Heart left ventricle (tissue), 16 donors: ENCODE measurements at regions of chr18 and their contacts with region 1.

Region 1: GRCh38 chr18:6132751-6133368 is 237.5 kb upstream of the TMEM200C start:
- DNase-seq: peak in 4 of 5 donors; percentile 33 to 65 (median 44)
- ATAC-seq: peak; percentile 94 to 98 (median 96)
- H3K4me3 ChIP-seq: no peak overlapping the region
- H3K27ac ChIP-seq: peak overlapping the region in 2 of 12 donors; percentile 60 to 63
- H3K4me1 ChIP-seq: peaks cover 0 to 16% (median 0%) of the 10 kb centered on the region in 12 donors
- H3K27me3 ChIP-seq: no peaks in the 10 kb centered on the region
- CTCF ChIP-seq: no peak
- POLR2A ChIP-seq: no peak

Region 2: DNA sequence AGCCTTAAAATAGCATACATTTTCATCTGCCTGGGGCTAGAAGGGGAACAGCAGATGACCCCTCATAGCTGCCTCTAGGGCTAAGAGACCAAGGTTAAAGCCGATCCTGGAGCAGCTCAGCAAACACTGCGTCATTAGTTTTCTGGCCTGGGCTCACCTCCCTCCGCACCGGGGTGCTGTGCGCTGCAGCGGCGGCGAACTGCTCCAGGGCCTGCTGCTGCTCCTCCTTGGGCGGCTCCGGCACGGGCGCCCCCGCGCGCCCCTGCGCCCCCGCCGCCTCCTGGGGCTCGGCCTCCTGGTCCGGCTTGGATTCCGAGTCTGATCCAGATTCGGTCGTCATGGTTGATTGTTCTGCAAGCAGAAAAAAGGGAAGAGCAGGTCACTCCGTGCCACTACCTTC is 644.0 kb before region 1 on chr18:
- intact Hi-C with region 1: no loop called
- DNase-seq: peak in 1 of 5 donors; percentile 63
- ATAC-seq: peak in 3 of 4 donors; percentile 42 to 66 (median 50)
- H3K4me3 ChIP-seq: peak overlapping the region in 2 of 12 donors; percentile 1 to 5
- H3K27ac ChIP-seq: peak overlapping the region in 1 of 12 donors; percentile 56
- H3K4me1 ChIP-seq: no peaks in the 10 kb centered on the region
- H3K27me3 ChIP-seq: no peaks in the 10 kb centered on the region
- CTCF ChIP-seq: no peak
- POLR2A ChIP-seq: no peak

Region 3: DNA sequence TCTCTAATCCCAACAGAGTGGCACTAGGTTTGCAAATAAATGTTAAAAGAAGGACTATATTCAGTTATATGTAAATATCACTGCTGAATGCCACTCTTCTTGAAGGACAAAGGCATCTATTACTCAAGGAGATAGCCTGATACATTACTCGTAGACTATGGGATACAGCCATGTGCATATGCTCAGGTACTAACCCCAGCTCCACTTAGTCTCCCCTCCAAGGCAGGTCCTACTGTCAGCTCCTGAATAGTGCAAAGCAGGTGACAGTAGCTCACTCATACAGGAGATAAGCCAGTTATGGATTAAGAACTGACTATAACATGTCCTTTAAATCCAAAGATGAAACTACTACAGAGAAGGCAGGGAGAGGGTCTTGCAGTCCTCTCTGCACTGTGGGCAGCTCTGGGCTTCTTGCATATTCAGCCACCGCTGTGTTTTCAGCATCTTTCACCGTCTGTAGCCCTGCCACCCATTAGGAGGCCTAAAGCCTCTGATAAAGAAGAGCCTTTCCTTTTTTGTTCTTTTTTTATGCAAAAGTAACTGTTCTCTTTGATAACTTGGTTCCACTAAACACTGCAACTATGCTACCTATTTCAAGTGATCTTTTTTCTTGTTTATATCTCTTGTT is 454.0 kb before region 1 on chr18:
- intact Hi-C with region 1: no loop called
- DNase-seq: no peak
- ATAC-seq: no peak
- H3K4me3 ChIP-seq: no peak overlapping the region
- H3K27ac ChIP-seq: no peak overlapping the region
- H3K4me1 ChIP-seq: no peaks in the 10 kb centered on the region
- H3K27me3 ChIP-seq: peaks cover 0 to 4% (median 0%) of the 10 kb centered on the region in 9 donors
- CTCF ChIP-seq: no peak
- POLR2A ChIP-seq: no peak

Region 4: GRCh38 chr18:5868218-5869115 is 264.4 kb before region 1 on chr18:
- intact Hi-C with region 1: no loop called
- DNase-seq: peak in 4 of 5 donors; percentile 55 to 65 (median 58)
- ATAC-seq: peak; percentile 61 to 93 (median 88)
- H3K4me3 ChIP-seq: no peak overlapping the region
- H3K27ac ChIP-seq: no peak overlapping the region
- H3K4me1 ChIP-seq: no peaks in the 10 kb centered on the region
- H3K27me3 ChIP-seq: peaks cover 0 to 20% (median 0%) of the 10 kb centered on the region in 9 donors
- CTCF ChIP-seq: peak; percentile 58 to 82 (median 76)
- POLR2A ChIP-seq: no peak

Region 5: DNA sequence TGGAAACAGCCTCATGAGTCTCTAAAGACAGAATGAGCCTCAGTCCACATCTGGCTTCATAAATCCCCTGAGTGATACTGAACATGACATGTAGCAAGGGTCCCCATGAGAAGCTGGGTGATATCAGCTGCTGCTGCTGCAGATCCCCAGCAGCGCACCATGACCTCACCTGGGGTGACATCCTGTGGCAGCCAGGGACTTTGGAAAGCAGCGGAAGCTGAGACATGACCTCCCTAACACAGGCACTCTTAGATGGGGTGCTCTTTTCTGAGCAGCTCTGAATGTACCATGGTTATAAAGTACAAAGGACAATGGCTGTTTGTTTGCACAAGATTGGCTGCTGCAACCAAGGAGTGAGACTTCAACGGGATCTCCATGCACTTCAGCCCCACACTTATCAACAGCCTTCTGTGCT is 162.9 kb before region 1 on chr18:
- intact Hi-C with region 1: loop called in 1 of 10 experiments (anchors 10 kb)
- DNase-seq: no peak
- ATAC-seq: no peak
- H3K4me3 ChIP-seq: no peak overlapping the region
- H3K27ac ChIP-seq: no peak overlapping the region
- H3K4me1 ChIP-seq: peaks cover 0 to 6% (median 0%) of the 10 kb centered on the region in 12 donors
- H3K27me3 ChIP-seq: peaks cover 0 to 2% (median 0%) of the 10 kb centered on the region in 9 donors
- CTCF ChIP-seq: no peak
- POLR2A ChIP-seq: no peak

Region 6: DNA sequence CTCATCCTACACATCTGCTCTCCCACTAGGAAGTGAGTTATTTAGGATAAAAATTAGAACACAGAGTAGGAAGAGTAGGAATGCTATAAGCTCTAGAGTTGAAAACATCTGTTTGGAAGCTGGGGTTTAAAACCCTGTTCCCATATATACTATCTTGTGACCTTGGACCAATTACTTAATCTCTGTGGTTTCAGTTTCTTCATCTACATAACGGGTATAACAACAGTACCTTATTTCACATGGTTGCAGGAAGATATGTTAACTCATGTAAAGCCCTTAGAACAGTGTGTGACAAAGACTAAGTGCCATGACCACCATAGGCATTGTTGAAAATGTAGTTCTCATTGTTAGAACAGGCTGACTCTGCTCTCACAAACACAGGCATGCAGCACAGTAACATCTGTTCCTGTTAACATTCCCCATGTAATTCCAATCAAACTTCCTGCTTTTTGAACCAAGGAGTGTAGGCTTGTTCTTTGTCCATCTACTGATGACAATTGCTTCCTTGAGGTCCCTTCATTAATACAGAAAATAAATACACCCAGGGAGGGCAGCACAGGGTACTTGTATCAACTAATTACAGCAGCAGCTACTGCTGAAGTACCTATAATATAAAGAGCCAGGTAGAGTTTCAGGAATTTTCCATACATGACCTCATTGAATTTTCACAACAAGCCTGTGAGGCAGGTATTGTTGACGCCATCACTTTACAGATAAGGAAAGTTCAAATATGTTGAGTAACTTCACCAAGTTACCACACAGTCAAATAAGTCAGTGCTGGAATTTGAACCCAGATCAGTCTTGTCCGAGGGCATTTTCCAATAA is 77.7 kb after region 1 on chr18:
- intact Hi-C with region 1: no loop called
- DNase-seq: no peak
- ATAC-seq: no peak
- H3K4me3 ChIP-seq: no peak overlapping the region
- H3K27ac ChIP-seq: no peak overlapping the region
- H3K4me1 ChIP-seq: no peaks in the 10 kb centered on the region
- H3K27me3 ChIP-seq: no peaks in the 10 kb centered on the region
- CTCF ChIP-seq: no peak
- POLR2A ChIP-seq: no peak

Region 7: DNA sequence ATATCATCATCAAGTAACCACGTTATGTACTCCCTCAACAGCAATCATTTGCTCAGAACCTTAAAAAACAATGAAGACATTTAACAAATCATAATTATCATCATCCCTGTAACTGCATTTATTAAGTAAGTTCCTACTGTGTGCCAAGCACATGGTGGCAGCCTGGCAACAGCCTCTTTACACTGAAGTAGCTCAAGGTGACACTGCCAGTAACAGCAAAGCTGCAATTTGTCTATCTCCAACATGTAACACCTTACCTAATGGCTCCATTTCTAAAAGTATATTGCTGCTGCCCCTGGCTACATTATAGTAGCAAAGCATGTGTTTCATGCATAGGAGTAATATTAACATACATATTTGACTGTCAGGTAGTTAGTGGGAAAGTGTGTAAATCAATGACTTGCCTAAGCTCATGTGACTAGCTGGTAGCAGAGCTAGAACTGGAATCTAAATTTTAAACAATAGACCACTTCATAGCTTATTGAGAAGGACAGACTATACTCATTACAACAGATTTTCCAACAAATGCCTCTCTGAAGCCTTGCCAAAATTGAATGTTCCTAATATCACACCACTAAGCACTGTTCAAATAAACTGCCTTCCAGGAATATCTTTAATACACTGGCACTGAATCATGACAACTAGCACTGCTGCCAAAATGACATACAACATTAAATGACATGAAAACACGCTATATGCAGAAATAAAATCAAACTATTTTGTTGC is 195.2 kb after region 1 on chr18:
- intact Hi-C with region 1: loop called in 1 of 10 experiments (anchors 10 kb)
- DNase-seq: no peak
- ATAC-seq: peak in 3 of 4 donors; percentile 58 to 90 (median 88)
- H3K4me3 ChIP-seq: no peak overlapping the region
- H3K27ac ChIP-seq: peak overlapping the region in 3 of 12 donors; percentile 40 to 51 (median 44)
- H3K4me1 ChIP-seq: peaks cover 0 to 7% (median 0%) of the 10 kb centered on the region in 12 donors
- H3K27me3 ChIP-seq: no peaks in the 10 kb centered on the region
- CTCF ChIP-seq: no peak
- POLR2A ChIP-seq: no peak